H1 (cell line): ENCODE measurements at regions of chr15 and their contacts with region 1.

Region 1: GRCh38 chr15:81155375-81156218 is 21.5 kb downstream of the CFAP161 start:
- DNase-seq: no peak
- H3K4me3 ChIP-seq: no peak overlapping the region
- H3K27ac ChIP-seq: no peak overlapping the region
- H3K4me1 ChIP-seq: no peaks in the 10 kb centered on the region
- H3K27me3 ChIP-seq: no peaks in the 10 kb centered on the region
- CTCF ChIP-seq: peak in 2 of 3 experiments; percentile 47 to 48; a peak in 2 of 4 replicates
- EP300 ChIP-seq: no peak
- POLR2A ChIP-seq: no peak
- RAD21 ChIP-seq: peak; percentile 54 to 65

Region 2: GRCh38 chr15:80906159-80906766 is 249.3 kb before region 1 on chr15:
- CTCF ChIA-PET with region 1: no interaction called
- POLR2A ChIA-PET with region 1: no interaction called
- DNase-seq: no peak
- H3K4me3 ChIP-seq: no peak overlapping the region
- H3K27ac ChIP-seq: no peak overlapping the region
- H3K4me1 ChIP-seq: peaks cover 0 to 3% (median 2%) of the 10 kb centered on the region in 4 experiments; a peak in 3 of 7 replicates
- H3K27me3 ChIP-seq: no peaks in the 10 kb centered on the region; a peak in 1 of 7 replicates
- CTCF ChIP-seq: no peak
- EP300 ChIP-seq: no peak
- POLR2A ChIP-seq: no peak
- RAD21 ChIP-seq: no peak

Region 3: DNA sequence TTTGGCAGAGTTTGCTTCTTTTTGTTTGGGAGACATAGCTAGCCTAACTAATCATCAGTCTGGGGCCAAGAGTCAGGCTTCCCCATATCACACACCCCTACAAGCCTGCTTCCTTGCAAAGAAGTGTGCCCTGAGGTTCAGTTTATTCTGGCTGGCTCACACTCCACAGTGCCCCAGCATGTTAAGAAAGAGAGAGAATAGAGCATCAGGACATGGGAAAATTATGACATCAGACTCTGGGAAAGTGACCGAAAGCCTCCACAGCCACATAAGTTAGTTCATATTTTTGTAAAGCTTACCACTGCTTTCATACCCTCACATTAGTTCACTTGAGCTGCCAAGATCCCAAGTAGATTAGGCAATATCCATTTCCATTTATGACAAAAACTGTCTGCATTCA is 84.5 kb before region 1 on chr15:
- CTCF ChIA-PET with region 1: no interaction called
- POLR2A ChIA-PET with region 1: no interaction called
- DNase-seq: peak in 1 of 2 experiments; percentile 10
- H3K4me3 ChIP-seq: no peak overlapping the region
- H3K27ac ChIP-seq: no peak overlapping the region
- H3K4me1 ChIP-seq: no peaks in the 10 kb centered on the region
- H3K27me3 ChIP-seq: no peaks in the 10 kb centered on the region
- CTCF ChIP-seq: no peak
- EP300 ChIP-seq: no peak
- POLR2A ChIP-seq: no peak
- RAD21 ChIP-seq: no peak

Region 4: DNA sequence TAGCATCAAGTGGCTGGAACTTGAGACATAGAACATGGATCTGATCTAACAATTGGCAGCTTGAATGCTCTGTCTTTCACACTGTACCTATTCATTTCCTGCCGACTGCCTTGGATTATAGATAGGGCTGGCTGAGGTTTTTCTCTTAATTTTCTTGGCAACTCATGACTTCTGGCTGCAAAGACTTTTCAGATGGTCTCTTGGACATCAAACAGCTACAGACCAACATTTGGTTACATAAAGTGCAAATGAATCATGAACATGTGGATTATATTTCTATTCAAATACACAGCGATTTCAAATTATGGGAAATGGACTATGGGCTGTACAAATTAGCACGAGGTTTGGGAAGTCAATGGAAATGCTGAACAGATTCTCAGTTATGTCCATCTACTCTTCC is 14.9 kb after region 1 on chr15:
- CTCF ChIA-PET with region 1: interaction called, 23 read pairs
- POLR2A ChIA-PET with region 1: interaction called, 3 read pairs
- DNase-seq: no peak
- H3K4me3 ChIP-seq: no peak overlapping the region
- H3K27ac ChIP-seq: no peak overlapping the region
- H3K4me1 ChIP-seq: peaks cover 0 to 7% (median 0%) of the 10 kb centered on the region in 4 experiments; a peak in 1 of 7 replicates
- H3K27me3 ChIP-seq: no peaks in the 10 kb centered on the region
- CTCF ChIP-seq: no peak
- EP300 ChIP-seq: no peak
- POLR2A ChIP-seq: no peak
- RAD21 ChIP-seq: no peak

Region 5: GRCh38 chr15:81176291-81176893 is 20.8 kb after region 1 on chr15:
- CTCF ChIA-PET with region 1: interaction called, 23 read pairs
- POLR2A ChIA-PET with region 1: no interaction called
- DNase-seq: no peak
- H3K4me3 ChIP-seq: no peak overlapping the region
- H3K27ac ChIP-seq: no peak overlapping the region
- H3K4me1 ChIP-seq: peaks cover 0 to 7% (median 0%) of the 10 kb centered on the region in 4 experiments; a peak in 1 of 7 replicates
- H3K27me3 ChIP-seq: no peaks in the 10 kb centered on the region
- CTCF ChIP-seq: peak in 1 of 3 experiments; percentile 25; a peak in 1 of 4 replicates
- EP300 ChIP-seq: no peak
- POLR2A ChIP-seq: no peak
- RAD21 ChIP-seq: peak in 1 of 2 experiments; percentile 10; a peak in 1 of 4 replicates

Region 6: DNA sequence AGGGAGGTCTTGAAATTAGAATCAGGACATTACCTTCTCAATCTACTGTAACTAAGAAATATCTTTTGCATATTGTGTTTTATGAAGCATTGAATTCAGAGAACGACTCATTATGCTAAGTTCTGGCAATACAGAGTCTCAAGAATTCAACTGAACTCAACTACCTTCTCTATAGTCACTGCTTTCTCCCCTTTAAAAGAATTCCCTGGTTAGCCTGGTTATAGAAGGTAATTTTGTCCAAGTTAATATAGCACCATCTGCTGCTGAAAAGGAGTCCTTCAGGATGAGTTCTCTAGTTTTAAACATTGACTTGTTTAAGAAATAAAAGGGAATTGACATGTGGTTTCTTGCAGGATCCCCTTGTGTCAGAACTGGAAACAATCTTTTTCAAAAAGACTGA is 101.3 kb after region 1 on chr15:
- CTCF ChIA-PET with region 1: interaction called, 59 read pairs
- POLR2A ChIA-PET with region 1: no interaction called
- DNase-seq: no peak
- H3K4me3 ChIP-seq: no peak overlapping the region
- H3K27ac ChIP-seq: no peak overlapping the region
- H3K4me1 ChIP-seq: no peaks in the 10 kb centered on the region
- H3K27me3 ChIP-seq: no peaks in the 10 kb centered on the region
- CTCF ChIP-seq: peak in 2 of 3 experiments; percentile 37 to 43; a peak in 2 of 4 replicates
- EP300 ChIP-seq: no peak
- POLR2A ChIP-seq: no peak
- RAD21 ChIP-seq: peak; percentile 55